ENCODE measurements at regions of chr11 and their contacts with region 1.

Region 1: DNA sequence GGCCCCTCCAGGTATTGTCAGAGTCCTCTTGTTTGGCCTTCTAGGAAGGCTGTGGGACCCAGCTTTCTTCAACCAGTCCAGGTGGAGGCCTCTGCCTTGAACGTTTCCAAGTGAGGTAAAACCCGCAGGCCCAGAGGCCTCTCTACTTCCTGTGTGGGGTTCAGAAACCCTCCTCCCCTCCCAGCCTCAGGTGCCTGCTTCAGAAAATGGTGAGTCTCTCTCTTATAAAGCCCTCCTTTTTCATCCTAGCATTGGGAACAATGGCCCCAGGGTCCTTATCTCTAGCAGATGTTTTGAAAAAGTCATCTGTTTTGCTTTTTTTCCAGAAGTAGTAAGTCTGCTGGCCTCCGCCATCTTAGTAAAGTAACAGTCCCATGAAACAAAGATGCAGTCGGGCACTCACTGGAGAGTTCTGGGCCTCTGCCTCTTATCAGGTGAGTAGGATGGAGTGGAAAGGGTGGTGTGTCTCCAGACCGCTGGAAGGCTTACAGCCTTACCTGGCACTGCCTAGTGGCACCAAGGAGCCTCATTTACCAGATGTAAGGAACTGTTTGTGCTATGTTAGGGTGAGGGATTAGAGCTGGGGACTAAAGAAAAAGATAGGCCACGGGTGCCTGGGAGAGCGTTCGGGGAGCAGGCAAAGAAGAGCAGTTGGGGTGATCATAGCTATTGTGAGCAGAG is at the start of gene CD3E:
- DNase-seq: peak; percentile 31 to 83 (median 79)
- ATAC-seq: peak; percentile 83
- H3K4me3 ChIP-seq: peak within 1 kb of the TSS; percentile 88
- H3K4me3 Mint-ChIP-seq: peak within 1 kb of the TSS; percentile 95 to 100 (median 99)
- H3K27ac ChIP-seq: peak within 1 kb of the TSS; percentile 92
- H3K27ac Mint-ChIP-seq: peak within 1 kb of the TSS; percentile 97 to 100 (median 100)
- H3K4me1 ChIP-seq: peaks cover 41 to 62% of the 10 kb centered on the region in 2 donors
- H3K4me1 Mint-ChIP-seq: peaks cover 54 to 91% (median 78%) of the 10 kb centered on the region in 7 donors
- H3K27me3 ChIP-seq: no peaks in the 10 kb centered on the region
- H3K27me3 Mint-ChIP-seq: no peaks in the 10 kb centered on the region
- total RNA-seq, gene CD3E: 392 to 706 (median 670) TPM

Region 2: GRCh38 chr11:118251858-118252652 is 52.7 kb before region 1 on chr11 and contains the start of gene MPZL3:
- CTCF ChIA-PET with region 1: interaction called, 4 read pairs
- POLR2A ChIA-PET with region 1: interaction called, 9 read pairs
- intact Hi-C with region 1: loop called in 1 of 2 experiments (anchors 2 kb)
- DNase-seq: peak; percentile 68 to 94 (median 87)
- ATAC-seq: peak; percentile 86
- H3K4me3 ChIP-seq: peak within 1 kb of the TSS; percentile 91
- H3K4me3 Mint-ChIP-seq: peak within 1 kb of the TSS; percentile 93 to 99 (median 96)
- H3K27ac ChIP-seq: peak within 1 kb of the TSS; percentile 93
- H3K27ac Mint-ChIP-seq: peak within 1 kb of the TSS; percentile 97 to 100 (median 99)
- H3K4me1 ChIP-seq: peaks cover 10 to 32% of the 10 kb centered on the region in 2 donors
- H3K4me1 Mint-ChIP-seq: peaks cover 16 to 52% (median 39%) of the 10 kb centered on the region in 7 donors
- H3K27me3 ChIP-seq: no peaks in the 10 kb centered on the region
- H3K27me3 Mint-ChIP-seq: no peaks in the 10 kb centered on the region
- total RNA-seq, gene MPZL3: 13.3 to 17.4 (median 17.0) TPM

Region 3: DNA sequence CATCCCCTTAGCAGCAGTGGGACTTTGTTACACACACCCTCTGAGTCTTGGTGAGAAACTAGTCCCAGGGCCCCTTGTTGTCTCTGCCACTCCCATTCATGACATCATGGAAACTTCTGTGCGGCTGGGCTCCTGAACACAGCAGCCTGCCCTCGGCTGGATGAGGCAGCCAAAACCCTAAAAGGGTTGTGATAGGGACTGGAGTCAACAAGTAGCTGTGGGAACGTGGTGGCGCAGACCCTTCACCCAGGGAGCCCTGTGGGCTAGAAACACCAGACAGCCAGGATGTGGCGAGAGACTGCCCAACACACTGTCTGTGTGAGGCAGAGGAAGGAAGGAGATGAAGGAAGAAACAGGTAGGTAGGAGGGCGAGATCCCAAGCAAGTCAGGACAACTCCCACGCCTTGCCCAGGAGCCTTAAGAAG is 33.9 kb after region 1 on chr11:
- CTCF ChIA-PET with region 1: interaction called, 74 read pairs
- POLR2A ChIA-PET with region 1: no interaction called
- intact Hi-C with region 1: loop called (anchors 1 kb)
- DNase-seq: peak; percentile 46 to 99 (median 92)
- ATAC-seq: peak; percentile 82
- H3K4me3 ChIP-seq: peak overlapping the region; percentile 88
- H3K4me3 Mint-ChIP-seq: peak overlapping the region; percentile 89 to 98 (median 96)
- H3K27ac ChIP-seq: peak overlapping the region; percentile 96
- H3K27ac Mint-ChIP-seq: peak overlapping the region; percentile 95 to 100 (median 99)
- H3K4me1 ChIP-seq: peaks cover 46 to 50% of the 10 kb centered on the region in 2 donors
- H3K4me1 Mint-ChIP-seq: peaks cover 28 to 68% (median 55%) of the 10 kb centered on the region in 7 donors
- H3K27me3 ChIP-seq: no peaks in the 10 kb centered on the region
- H3K27me3 Mint-ChIP-seq: no peaks in the 10 kb centered on the region

Region 4: DNA sequence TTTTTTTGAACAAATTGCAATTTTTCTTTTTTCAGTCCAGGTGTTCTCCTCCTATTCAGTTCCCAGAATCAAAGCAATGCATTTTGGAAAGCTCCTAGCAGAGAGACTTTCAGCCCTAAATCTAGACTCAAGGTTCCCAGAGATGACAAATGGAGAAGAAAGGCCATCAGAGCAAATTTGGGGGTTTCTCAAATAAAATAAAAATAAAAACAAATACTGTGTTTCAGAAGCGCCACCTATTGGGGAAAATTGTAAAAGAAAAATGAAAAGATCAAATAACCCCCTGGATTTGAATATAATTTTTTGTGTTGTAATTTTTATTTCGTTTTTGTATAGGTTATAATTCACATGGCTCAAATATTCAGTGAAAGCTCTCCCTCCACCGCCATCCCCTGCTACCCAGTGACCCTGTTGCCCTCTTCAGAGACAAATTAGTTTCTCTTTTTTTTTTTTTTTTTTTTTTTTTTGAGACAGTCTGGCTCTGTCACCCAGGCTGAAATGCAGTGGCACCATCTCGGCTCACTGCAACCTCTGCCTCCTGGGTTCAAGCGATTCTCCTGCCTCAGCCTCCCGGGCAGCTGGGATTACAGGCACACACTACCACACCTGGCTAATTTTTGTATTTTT is 48.5 kb after region 1 on chr11:
- CTCF ChIA-PET with region 1: interaction called, 90 read pairs
- POLR2A ChIA-PET with region 1: no interaction called
- intact Hi-C with region 1: loop called (anchors 2 kb)
- DNase-seq: peak in 7 of 9 donors; percentile 21 to 70 (median 61)
- ATAC-seq: peak; percentile 51
- H3K4me3 ChIP-seq: no peak overlapping the region
- H3K4me3 Mint-ChIP-seq: no peak overlapping the region
- H3K27ac ChIP-seq: peak overlapping the region; percentile 62
- H3K27ac Mint-ChIP-seq: peak overlapping the region; percentile 38 to 96 (median 91)
- H3K4me1 ChIP-seq: peaks cover 13 to 15% of the 10 kb centered on the region in 2 donors
- H3K4me1 Mint-ChIP-seq: peaks cover 5 to 53% (median 35%) of the 10 kb centered on the region in 7 donors
- H3K27me3 ChIP-seq: no peaks in the 10 kb centered on the region
- H3K27me3 Mint-ChIP-seq: no peaks in the 10 kb centered on the region

Region 5: DNA sequence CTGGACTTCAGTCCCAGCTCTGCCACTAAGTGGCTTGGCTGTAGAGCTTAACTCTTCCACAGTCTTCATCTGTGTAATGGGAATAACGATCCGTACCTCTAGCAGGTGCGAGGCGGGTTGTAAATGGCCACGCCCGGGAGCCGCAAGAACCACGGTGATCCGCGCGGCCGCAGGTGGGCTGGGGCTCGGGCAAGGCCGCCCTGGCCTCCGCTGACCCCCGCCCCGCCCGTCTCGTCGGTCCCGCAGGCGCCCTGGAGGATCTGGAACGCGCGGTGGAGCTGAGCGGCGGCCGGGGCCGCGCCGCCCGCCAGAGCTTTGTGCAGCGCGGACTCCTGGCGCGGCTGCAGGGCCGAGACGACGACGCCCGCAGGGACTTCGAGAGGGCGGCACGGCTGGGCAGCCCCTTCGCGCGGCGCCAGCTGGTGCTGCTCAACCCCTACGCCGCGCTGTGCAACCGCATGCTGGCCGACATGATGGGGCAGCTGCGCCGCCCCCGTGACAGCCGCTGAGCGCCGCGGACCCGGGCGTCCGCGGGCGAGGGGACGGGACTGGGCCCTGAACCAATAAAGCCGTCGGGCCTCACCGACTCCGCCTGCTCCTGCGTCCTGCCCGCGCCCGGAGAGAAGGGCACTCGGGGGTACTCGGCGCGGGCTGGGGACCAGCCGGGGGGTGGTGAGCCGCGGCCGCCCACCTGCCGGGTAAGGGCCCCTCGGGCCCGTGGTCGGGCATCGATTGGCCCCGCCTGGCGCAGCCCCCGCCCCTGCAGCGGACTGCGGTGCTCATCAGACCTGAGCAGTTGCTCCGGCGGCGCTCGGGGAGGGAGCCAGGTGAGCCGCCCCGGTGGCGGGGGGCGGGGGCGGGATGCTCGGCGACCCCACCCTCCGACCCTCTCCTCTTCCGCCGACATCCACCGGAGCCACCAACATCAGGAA is 226.0 kb after region 1 on chr11 and contains the start of gene TMEM25:
- CTCF ChIA-PET with region 1: no interaction called
- POLR2A ChIA-PET with region 1: no interaction called
- intact Hi-C with region 1: loop called in 1 of 2 experiments (anchors 2 kb)
- DNase-seq: peak; percentile 55 to 82 (median 73)
- ATAC-seq: peak; percentile 90
- H3K4me3 ChIP-seq: peak within 1 kb of the TSS; percentile 83
- H3K4me3 Mint-ChIP-seq: peak within 1 kb of the TSS; percentile 92 to 99 (median 94)
- H3K27ac ChIP-seq: peak within 1 kb of the TSS; percentile 83
- H3K27ac Mint-ChIP-seq: peak within 1 kb of the TSS; percentile 82 to 96 (median 91)
- H3K4me1 ChIP-seq: peaks cover 13 to 14% of the 10 kb centered on the region in 2 donors
- H3K4me1 Mint-ChIP-seq: peaks cover 24 to 51% (median 45%) of the 10 kb centered on the region in 7 donors
- H3K27me3 ChIP-seq: no peaks in the 10 kb centered on the region
- H3K27me3 Mint-ChIP-seq: peaks cover 0 to 3% (median 0%) of the 10 kb centered on the region in 5 donors
- total RNA-seq, gene TMEM25: 12.1 to 32.8 (median 27.6) TPM

Measured in naive thymus-derived CD4-positive, alpha-beta T cell (primary cell).